Calu3 (cell line): ENCODE measurements at regions of chrX and their contacts with region 1.

Region 1: DNA sequence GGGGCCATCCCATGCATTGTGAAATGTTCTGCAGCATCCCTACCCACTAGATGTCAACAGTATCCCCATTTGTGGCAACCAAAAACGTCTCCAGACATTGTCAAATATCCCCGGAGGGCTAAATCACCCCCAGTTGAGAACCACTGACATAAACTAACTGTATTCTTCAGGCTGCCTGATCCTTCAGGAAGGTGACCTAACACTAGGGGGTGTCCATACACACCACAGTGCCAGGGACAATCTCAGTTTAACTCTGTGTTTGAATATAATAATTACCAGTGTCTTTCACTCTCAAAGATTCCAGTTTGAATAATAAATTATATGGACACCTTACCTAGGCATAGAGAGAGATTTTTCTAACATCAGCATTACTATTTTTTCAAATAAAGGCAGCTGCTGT is 6.4 kb downstream of the ACE2 start:
- DNase-seq: no peak
- H3K4me3 Mint-ChIP-seq: no peak overlapping the region
- H3K27ac Mint-ChIP-seq: no peak overlapping the region
- H3K4me1 Mint-ChIP-seq: peaks cover 9% of the 10 kb centered on the region
- H3K27me3 Mint-ChIP-seq: no peaks in the 10 kb centered on the region
- CTCF ChIP-seq: peak; percentile 38

Region 2: DNA sequence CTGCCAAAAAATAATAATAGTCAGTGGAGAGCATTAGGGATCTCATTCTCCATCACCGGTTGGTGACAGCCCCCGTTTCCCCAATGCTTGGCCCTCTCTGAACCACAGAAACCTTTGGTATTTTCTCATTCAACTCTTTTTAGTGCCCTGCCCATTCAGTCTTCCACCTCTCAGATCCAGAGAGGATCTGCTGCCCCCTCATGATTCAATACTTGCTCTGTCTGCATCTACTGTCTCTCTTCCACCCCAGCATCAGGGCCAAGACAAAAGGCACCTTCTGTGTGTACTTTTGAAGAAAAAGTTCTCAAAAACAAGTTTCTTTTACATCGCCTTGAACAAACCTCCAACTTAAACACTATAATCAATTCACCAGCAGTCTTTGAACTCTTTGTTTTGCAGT is 50.9 kb after region 1 on chrX:
- CTCF ChIA-PET with region 1: no interaction called
- intact Hi-C with region 1: loop called (anchors 2 kb)
- DNase-seq: peak; percentile 10
- H3K4me3 Mint-ChIP-seq: no peak overlapping the region
- H3K27ac Mint-ChIP-seq: no peak overlapping the region
- H3K4me1 Mint-ChIP-seq: peaks cover 16% of the 10 kb centered on the region
- H3K27me3 Mint-ChIP-seq: no peaks in the 10 kb centered on the region
- CTCF ChIP-seq: no peak